Activated CD8-positive, alpha-beta memory T cell treated with anti-CD3 and anti-CD28 coated beads, Interleukin-2, amount 10 ng/mL, durations not matched to agents 7 days and 5 days (primary cell): ENCODE measurements at regions of chr3 and their contacts with region 1.

Region 1: DNA sequence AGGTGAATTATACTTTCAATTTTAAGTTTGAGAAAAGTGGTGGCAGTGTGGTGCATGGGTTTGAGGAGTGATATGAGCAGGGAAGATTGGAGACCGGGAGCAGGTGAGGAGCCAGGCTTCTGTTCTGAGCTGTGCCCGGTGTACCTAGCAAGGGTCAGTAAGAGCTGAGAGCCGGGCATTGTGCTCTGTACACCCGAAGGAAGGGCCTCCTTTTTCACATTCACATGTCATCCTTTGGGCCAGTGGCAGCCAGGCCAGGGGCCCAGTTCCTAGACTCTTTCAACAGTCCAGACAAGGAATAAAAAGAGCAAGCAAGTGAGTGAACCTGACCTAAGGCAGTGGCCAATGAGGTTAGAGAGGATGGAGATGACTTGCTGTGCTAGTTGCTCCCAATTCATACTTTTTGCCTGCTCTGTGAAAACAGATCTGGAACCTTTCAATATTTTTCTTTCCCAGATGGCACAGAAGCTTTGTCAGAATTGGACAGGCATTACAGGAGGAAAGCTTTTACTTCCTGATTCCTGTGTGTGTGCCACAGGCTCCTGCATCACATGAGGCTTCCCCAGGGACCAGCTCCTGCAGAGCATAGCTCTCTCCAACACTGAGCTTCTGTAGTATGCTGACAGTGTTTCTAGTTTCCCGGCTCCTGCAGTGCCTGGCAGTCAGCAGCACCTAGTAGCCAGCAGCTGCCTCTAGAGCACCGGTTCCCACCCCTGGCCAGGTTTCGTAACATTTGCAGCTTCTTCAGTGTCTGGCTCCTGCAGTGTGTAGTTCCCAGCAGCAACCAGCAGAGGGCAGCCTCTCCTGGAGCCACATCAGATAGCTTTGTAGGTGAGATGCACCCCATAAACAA is 5.3 kb upstream of the TRA2B start:
- DNase-seq: peak; percentile 91
- ATAC-seq: peak; percentile 95
- H3K4me3 Mint-ChIP-seq: no peak overlapping the region
- H3K27ac Mint-ChIP-seq: no peak overlapping the region
- H3K4me1 Mint-ChIP-seq: peaks cover 24% of the 10 kb centered on the region
- H3K27me3 Mint-ChIP-seq: peaks cover 19% of the 10 kb centered on the region

Region 2: DNA sequence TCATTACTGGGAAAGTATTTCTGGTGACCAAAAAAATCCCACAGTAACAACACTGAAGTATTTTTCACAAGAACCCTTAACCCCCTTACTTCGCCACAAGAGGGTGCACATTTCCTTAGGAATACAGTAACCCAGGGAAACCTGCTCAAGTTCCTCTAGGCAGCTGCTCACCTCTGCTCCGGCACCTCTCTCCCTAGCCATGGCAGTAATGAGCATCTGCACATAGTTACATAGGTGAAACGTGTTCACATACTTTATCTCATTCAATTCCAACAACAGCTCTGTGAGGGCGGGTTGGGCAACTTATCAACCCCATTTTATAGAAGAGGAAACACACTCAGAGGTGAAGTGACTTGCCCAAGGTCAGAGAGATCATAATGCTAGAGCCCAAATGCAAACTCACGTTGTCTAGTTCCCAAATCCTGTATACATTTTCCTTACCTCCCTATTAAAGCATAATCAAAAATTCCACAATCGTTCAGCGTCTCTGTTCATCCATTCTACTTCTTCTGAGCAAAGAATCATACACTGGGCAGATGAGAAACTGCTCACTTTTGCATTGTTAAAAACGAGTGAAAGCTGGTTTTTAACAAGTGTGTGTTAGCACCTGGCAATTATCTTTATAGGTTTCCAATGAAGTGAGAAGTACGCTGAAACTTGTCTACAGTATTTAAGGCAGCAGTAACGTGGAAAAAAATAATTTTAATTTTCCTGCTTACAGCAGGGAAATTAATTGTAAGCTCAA is 209.0 kb before region 1 on chr3:
- CTCF ChIA-PET with region 1: no interaction called
- DNase-seq: no peak
- ATAC-seq: no peak
- H3K4me3 Mint-ChIP-seq: no peak overlapping the region
- H3K27ac Mint-ChIP-seq: no peak overlapping the region
- H3K4me1 Mint-ChIP-seq: no peaks in the 10 kb centered on the region
- H3K27me3 Mint-ChIP-seq: peaks cover 21% of the 10 kb centered on the region

Region 3: GRCh38 chr3:185924375-185924774 is 18.8 kb before region 1 on chr3:
- CTCF ChIA-PET with region 1: interaction called, 52 read pairs
- DNase-seq: no peak
- ATAC-seq: no peak
- H3K4me3 Mint-ChIP-seq: no peak overlapping the region
- H3K27ac Mint-ChIP-seq: no peak overlapping the region
- H3K4me1 Mint-ChIP-seq: peaks cover 54% of the 10 kb centered on the region
- H3K27me3 Mint-ChIP-seq: no peaks in the 10 kb centered on the region

Region 4: GRCh38 chr3:185954366-185954723 is 11.2 kb after region 1 on chr3:
- CTCF ChIA-PET with region 1: interaction called, 34 read pairs
- DNase-seq: no peak
- ATAC-seq: no peak
- H3K4me3 Mint-ChIP-seq: no peak overlapping the region
- H3K27ac Mint-ChIP-seq: no peak overlapping the region
- H3K4me1 Mint-ChIP-seq: no peaks in the 10 kb centered on the region
- H3K27me3 Mint-ChIP-seq: peaks cover 47% of the 10 kb centered on the region

Region 5: DNA sequence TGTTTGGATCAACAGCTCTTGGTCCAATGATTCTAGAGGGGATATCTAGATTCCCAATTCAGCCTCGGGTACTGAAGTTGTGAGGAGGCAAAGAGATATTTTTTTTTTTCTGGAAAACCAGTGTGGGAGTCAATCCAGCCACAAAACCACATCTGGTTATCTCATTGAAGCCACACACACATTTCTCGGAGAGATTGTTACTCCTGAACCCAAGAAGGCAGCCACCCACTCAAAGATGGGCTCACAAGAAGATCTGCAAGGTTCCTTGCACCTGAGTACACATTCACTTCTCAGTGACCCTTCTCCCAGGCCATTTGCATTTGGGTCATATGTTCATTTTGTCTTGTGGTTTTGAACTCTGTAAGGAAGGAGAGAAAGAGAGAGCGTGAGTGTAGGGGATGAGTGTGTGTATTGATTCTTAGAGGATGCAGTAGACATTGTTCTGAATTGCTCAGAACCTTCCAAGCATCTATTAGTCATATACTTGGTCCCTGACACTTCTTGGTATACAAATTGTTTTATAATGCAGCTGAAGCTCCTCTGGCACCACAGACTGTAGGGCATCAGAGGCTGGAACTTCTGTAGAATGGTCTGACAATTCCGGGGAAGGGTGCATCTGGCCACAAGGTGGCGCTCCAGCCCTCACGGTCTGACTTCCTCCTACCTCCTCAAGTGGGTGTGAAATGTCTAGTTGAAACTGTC is 34.0 kb after region 1 on chr3:
- CTCF ChIA-PET with region 1: interaction called, 38 read pairs
- DNase-seq: peak; percentile 90
- ATAC-seq: peak; percentile 97
- H3K4me3 Mint-ChIP-seq: no peak overlapping the region
- H3K27ac Mint-ChIP-seq: no peak overlapping the region
- H3K4me1 Mint-ChIP-seq: peaks cover 14% of the 10 kb centered on the region
- H3K27me3 Mint-ChIP-seq: peaks cover 35% of the 10 kb centered on the region

Region 6: DNA sequence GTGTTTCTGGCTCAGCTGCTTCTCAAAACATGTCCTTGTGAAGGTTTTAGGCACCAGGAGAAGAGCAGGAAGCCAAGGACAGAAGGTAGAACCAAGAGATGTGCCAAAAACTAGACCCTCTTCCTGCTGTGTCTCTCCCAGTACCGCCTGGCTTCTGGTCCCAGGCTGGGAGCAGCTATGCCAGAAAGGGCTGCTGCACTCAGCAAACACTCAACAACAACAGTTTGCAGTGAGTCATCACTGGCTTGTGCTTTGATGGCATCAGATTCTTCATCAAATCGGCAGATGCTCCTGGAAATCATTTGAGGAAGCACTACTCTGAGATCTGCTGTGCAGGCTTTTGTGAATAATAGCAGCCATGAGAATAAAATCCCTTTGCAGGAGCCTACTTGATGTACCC is 355.7 kb after region 1 on chr3:
- CTCF ChIA-PET with region 1: no interaction called
- DNase-seq: no peak
- ATAC-seq: no peak
- H3K4me3 Mint-ChIP-seq: no peak overlapping the region
- H3K27ac Mint-ChIP-seq: no peak overlapping the region
- H3K4me1 Mint-ChIP-seq: no peaks in the 10 kb centered on the region
- H3K27me3 Mint-ChIP-seq: peaks cover 13% of the 10 kb centered on the region

Region 7: DNA sequence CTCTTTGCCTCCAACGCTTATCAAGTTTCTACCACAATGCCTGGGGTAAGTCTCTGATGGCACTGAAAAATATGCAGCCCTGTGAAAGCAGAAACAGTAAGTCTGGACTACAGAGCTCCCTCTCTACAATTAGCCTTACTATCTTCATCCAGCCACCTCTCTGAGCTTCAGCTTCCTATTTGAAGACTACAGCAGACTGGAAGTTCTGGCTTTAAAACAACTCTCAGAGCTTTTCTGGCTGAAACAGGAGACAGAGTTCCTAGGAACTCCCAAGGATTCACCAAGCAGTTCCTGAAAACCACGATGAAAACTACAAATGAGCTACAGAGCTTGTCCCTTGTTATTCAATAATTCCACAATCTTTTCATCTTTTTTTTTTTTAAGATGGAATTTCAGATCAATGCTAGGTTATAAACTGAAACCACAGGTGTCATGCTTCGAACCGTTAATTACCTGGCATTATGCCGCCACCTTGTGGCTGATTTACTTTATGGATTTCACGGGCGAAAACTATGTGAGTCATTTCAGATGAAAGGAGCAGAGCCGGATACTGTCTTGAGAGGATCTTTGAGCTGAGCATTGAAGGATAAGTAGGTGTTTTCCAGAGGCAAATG is 597.2 kb after region 1 on chr3:
- CTCF ChIA-PET with region 1: interaction called, 22 read pairs
- DNase-seq: peak; percentile 87
- ATAC-seq: peak; percentile 93
- H3K4me3 Mint-ChIP-seq: no peak overlapping the region
- H3K27ac Mint-ChIP-seq: peak overlapping the region; percentile 5
- H3K4me1 Mint-ChIP-seq: peaks cover 15% of the 10 kb centered on the region
- H3K27me3 Mint-ChIP-seq: no peaks in the 10 kb centered on the region